ENCODE measurements at regions of chr15 and their contacts with region 1.

Region 1: GRCh38 chr15:53197426-53197839 is 407.3 kb upstream of the ONECUT1 start:
- DNase-seq: peak; percentile 41 to 60
- H3K4me3 ChIP-seq: no peak overlapping the region
- H3K4me3 Mint-ChIP-seq: no peak overlapping the region
- H3K27ac Mint-ChIP-seq: no peak overlapping the region
- H3K4me1 ChIP-seq: no peaks in the 10 kb centered on the region
- H3K4me1 Mint-ChIP-seq: no peaks in the 10 kb centered on the region
- H3K27me3 ChIP-seq: no peaks in the 10 kb centered on the region
- H3K27me3 Mint-ChIP-seq: peaks cover 10% of the 10 kb centered on the region
- CTCF ChIP-seq: peak; percentile 89

Region 2: DNA sequence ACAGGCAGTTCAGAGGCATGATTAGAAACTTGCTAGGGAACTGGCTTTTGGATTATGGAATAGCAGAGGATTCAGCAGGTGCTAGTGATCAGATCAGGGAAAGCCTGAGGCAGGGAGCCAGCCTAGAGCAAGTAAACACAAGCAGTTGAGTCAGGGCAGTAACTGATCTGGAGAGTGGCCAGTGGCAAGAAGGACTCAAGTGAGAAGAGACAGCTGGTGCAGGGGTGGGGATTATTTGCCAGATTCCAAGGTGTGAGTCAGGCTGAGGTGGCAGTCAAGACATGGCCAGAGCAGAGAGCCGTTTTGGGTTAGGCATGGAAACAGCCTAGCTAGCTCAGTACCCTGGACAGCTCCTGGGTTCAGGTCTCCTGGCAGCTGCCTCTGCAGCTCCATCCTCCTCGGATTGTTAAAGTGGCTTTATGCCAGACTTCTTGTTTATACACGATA is 125.4 kb before region 1 on chr15:
- CTCF ChIA-PET with region 1: no interaction called
- POLR2A ChIA-PET with region 1: no interaction called
- intact Hi-C with region 1: loop called (anchors 10 kb)
- DNase-seq: peak; percentile 61 to 71
- H3K4me3 ChIP-seq: no peak overlapping the region
- H3K4me3 Mint-ChIP-seq: no peak overlapping the region
- H3K27ac Mint-ChIP-seq: no peak overlapping the region
- H3K4me1 ChIP-seq: no peaks in the 10 kb centered on the region
- H3K4me1 Mint-ChIP-seq: no peaks in the 10 kb centered on the region
- H3K27me3 ChIP-seq: no peaks in the 10 kb centered on the region; the same call in 1 of the 2 replicates
- H3K27me3 Mint-ChIP-seq: peaks cover 7% of the 10 kb centered on the region
- CTCF ChIP-seq: no peak

Region 3: GRCh38 chr15:53218666-53219580 is 21.5 kb after region 1 on chr15:
- CTCF ChIA-PET with region 1: no interaction called
- POLR2A ChIA-PET with region 1: no interaction called
- intact Hi-C with region 1: no loop called
- DNase-seq: no peak
- H3K4me3 ChIP-seq: no peak overlapping the region
- H3K4me3 Mint-ChIP-seq: no peak overlapping the region
- H3K27ac Mint-ChIP-seq: no peak overlapping the region
- H3K4me1 ChIP-seq: no peaks in the 10 kb centered on the region
- H3K4me1 Mint-ChIP-seq: no peaks in the 10 kb centered on the region
- H3K27me3 ChIP-seq: no peaks in the 10 kb centered on the region
- H3K27me3 Mint-ChIP-seq: peaks cover 14% of the 10 kb centered on the region
- CTCF ChIP-seq: no peak

Measured in Caco-2 (cell line).